Panc1 (cell line): ENCODE measurements at regions of chr3 and their contacts with region 1.

Region 1: DNA sequence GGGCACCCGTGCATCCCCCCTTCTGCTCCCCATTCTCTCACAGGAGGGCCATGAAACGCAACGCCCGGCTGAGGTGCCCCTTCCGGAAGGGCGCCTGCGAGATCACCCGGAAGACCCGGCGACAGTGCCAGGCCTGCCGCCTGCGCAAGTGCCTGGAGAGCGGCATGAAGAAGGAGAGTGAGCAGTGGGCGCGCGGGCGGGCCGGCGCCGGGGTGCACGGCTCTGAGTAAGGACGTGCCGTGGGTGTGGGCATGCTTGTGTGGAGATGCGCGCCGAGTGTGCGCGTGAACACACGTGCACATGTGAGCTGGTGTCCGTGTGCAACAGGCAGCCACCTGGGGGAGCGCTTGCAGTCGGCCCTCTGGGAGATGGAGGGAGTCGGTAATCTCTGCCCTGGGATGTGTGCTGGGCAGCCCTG is 28.1 kb downstream of the NR1I2 start:
- DNase-seq: no peak
- ATAC-seq: no peak
- H3K4me3 ChIP-seq: no peak overlapping the region
- H3K27ac ChIP-seq: no peak overlapping the region
- H3K4me1 ChIP-seq: no peaks in the 10 kb centered on the region
- H3K27me3 ChIP-seq: no peaks in the 10 kb centered on the region
- CTCF ChIP-seq: no peak

Region 2: GRCh38 chr3:119690043-119690656 is 119.9 kb before region 1 on chr3:
- CTCF ChIA-PET with region 1: no interaction called
- POLR2A ChIA-PET with region 1: no interaction called
- in situ Hi-C with region 1: no loop called
- intact Hi-C with region 1: no loop called
- DNase-seq: no peak
- ATAC-seq: no peak
- H3K4me3 ChIP-seq: no peak overlapping the region
- H3K27ac ChIP-seq: no peak overlapping the region
- H3K4me1 ChIP-seq: no peaks in the 10 kb centered on the region
- H3K27me3 ChIP-seq: peaks cover 5% of the 10 kb centered on the region; the same call in 1 of the 2 replicates
- CTCF ChIP-seq: peak; percentile 67; the same call in 1 of the 2 replicates

Region 3: DNA sequence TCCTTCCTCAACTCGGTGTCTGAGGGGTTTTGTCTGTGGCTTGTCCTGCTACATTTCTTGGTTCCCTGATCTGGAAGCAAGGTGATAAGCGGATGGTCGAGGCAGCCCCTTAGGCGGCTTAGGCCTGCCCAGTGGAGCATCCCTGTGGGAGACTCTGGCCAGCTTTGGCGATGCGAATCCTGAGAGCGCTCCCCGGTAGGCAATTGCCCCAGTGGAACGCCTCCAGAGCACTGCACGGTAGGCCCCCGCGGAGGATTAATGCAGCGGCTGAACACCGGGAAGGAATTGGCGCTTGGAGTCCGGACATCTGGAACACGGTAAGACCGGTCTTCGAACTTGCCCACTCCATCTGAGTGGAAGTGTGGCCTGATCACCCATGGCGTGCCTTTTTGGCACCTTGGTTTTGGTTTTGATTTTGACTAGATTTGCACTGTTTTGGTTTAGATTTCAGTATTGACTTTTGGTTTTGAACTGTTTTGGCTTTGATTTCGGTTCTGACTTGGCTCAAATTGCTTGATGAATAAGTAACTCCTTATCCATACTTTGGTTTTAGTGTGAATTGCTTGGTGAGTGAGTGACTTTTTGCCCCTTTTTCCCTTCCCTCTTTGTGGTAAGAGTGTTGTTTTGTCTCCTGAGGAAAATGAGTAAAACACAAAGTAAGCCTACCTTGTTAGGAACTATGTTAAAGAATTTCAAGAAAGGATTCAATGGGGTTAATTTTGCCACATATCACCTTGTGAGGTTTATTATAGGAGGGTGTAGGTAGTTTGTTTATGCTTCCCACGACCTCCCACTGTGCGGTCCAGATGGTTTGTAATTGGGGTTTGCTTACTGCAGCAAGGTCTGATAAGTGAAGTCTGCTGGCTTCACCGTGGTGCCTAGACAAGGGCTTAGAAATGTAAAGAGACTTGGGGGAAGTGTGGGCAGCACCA is 502.1 kb after region 1 on chr3:
- CTCF ChIA-PET with region 1: interaction called, 11 read pairs
- POLR2A ChIA-PET with region 1: no interaction called
- in situ Hi-C with region 1: no loop called
- intact Hi-C with region 1: no loop called
- DNase-seq: no peak
- ATAC-seq: no peak
- H3K4me3 ChIP-seq: no peak overlapping the region
- H3K27ac ChIP-seq: no peak overlapping the region
- H3K4me1 ChIP-seq: no peaks in the 10 kb centered on the region
- H3K27me3 ChIP-seq: no peaks in the 10 kb centered on the region
- CTCF ChIP-seq: no peak